Calu3 (cell line): ENCODE measurements at regions of chr1 and their contacts with region 1.

Region 1: GRCh38 chr1:112706908-112707663 is at the start of gene RHOC:
- DNase-seq: peak; percentile 86
- H3K4me3 Mint-ChIP-seq: peak within 1 kb of the TSS; percentile 97
- H3K27ac Mint-ChIP-seq: peak within 1 kb of the TSS; percentile 96
- H3K4me1 Mint-ChIP-seq: peaks cover 34% of the 10 kb centered on the region
- H3K27me3 Mint-ChIP-seq: no peaks in the 10 kb centered on the region
- CTCF ChIP-seq: peak; percentile 78
- total RNA-seq, gene RHOC: 176 and 197 TPM in 2 replicates

Region 2: DNA sequence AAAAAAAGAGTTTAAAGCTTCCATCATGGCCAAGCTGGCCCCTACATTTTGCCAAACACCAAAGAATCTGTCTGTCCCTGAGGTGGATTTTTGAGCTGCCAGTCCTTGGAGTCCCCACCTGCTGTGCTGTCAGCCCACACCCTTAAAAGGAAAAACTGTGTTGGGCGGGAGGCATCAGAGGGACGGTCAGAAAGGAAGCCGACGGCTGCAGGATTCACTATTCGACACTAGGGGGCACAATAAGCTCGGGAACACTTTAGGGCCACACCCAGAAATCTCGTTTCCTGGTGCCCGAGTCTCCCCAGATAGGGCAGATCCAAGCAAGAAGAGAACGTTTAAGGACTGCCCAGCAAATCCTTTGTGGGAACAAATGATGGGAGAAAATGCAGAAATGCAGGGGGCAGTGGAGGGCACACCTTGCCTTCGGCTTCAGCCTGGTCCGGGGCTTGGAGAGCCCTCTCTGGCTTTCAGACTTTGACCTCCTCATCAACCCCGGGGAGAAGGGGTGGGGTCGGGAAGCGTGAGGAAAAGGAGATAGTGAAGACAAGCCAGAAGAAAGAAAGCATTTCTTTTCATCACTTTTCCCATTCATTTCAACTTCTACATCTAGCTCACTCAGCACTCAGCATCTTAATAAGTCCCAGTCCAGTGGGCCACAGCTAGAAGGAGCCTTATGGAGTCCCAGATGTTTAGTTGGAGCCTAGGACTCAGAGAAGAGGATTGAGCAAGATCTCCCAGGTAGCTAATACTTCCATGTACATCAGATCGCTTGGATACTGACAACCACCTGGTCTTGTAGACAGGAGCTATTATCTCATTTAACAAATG is 316.1 kb before region 1 on chr1:
- CTCF ChIA-PET with region 1: interaction called, 3 read pairs
- intact Hi-C with region 1: loop called (anchors 5 kb)
- DNase-seq: peak; percentile 83
- H3K4me3 Mint-ChIP-seq: peak overlapping the region; percentile 66
- H3K27ac Mint-ChIP-seq: peak overlapping the region; percentile 81
- H3K4me1 Mint-ChIP-seq: peaks cover 44% of the 10 kb centered on the region
- H3K27me3 Mint-ChIP-seq: no peaks in the 10 kb centered on the region
- CTCF ChIP-seq: peak; percentile 75

Region 3: GRCh38 chr1:112619520-112620376 is 87.3 kb before region 1 on chr1 and contains the start of gene CAPZA1:
- CTCF ChIA-PET with region 1: no interaction called
- intact Hi-C with region 1: loop called (anchors 2 kb)
- DNase-seq: peak; percentile 84
- H3K4me3 Mint-ChIP-seq: peak within 1 kb of the TSS; percentile 93
- H3K27ac Mint-ChIP-seq: peak within 1 kb of the TSS; percentile 97
- H3K4me1 Mint-ChIP-seq: peaks cover 1% of the 10 kb centered on the region
- H3K27me3 Mint-ChIP-seq: no peaks in the 10 kb centered on the region
- CTCF ChIP-seq: no peak
- total RNA-seq, gene CAPZA1: 103 and 117 TPM in 2 replicates

Region 4: DNA sequence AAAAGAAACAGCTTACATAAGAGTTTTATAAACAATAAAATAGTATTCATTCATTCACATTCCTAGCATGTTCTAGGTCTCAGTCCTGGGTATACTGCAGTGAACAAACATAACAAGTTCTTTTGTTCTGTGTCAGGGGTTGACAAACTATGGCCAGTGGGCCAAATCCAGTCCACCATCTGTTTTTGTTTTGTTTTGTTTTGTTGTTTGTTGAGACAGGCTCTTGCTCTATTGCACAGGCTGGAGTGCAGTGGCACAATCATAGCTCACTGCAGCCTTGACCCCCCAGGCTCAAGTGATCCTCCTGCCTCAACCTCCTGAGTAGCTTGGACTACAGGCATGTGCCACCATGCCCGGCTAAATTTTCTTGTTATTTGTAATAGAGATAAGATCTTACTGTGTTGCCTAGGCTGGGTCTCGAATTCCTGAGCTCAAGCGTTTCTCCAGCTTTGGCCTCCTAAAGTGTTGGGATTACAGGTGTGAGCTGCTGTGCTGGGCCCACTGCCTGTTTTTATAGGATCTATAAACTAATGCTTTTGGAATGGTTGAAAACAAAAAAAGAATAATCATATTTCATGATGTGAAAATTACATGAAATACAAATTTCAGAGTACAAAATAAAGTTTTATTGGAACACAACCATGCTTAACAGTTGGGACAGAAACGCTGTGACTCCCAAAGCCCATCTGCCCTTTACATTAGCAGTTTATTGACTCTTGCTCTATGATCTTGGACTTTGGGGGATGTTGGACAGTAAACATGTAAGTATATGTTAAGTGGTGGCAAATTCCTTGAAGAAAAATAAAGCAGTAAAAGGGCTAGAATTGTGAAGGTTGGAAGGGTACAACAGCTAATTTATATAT is 69.6 kb before region 1 on chr1:
- CTCF ChIA-PET with region 1: interaction called, 3 read pairs
- intact Hi-C with region 1: loop called (anchors 5 kb)
- DNase-seq: peak; percentile 13
- H3K4me3 Mint-ChIP-seq: no peak overlapping the region
- H3K27ac Mint-ChIP-seq: peak overlapping the region; percentile 40
- H3K4me1 Mint-ChIP-seq: peaks cover 34% of the 10 kb centered on the region
- H3K27me3 Mint-ChIP-seq: no peaks in the 10 kb centered on the region
- CTCF ChIP-seq: no peak

Region 5: DNA sequence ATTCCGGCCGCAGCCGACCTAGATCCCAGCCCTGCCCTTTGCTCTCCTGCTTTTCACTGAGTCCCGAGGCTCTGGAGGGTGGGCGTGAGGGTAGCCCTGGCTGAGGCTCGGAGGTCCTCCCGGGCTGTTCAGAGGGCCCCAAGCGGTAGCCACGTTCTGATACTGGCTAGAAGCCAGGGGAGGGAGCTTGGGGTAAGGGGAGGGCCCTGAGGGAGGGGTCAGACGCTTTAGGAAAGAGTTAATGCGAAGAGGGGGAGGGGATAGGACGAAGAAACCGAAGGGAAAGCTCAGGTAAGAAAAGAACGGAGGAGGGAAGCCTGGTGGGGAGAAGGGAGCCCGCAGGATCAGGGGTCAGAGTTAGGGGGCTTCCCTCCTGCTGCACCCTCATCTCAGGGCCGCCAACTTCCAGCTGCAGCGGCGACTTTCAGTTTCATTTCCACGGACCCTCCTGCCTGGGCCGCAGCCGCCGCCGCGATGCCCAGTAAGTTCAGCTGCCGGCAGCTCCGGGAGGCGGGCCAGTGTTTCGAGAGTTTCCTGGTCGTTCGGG is 32.6 kb before region 1 on chr1 and contains the start of gene MOV10:
- CTCF ChIA-PET with region 1: interaction called, 10 read pairs
- intact Hi-C with region 1: no loop called
- DNase-seq: peak; percentile 48
- H3K4me3 Mint-ChIP-seq: peak within 1 kb of the TSS; percentile 90
- H3K27ac Mint-ChIP-seq: peak within 1 kb of the TSS; percentile 94
- H3K4me1 Mint-ChIP-seq: peaks cover 23% of the 10 kb centered on the region
- H3K27me3 Mint-ChIP-seq: no peaks in the 10 kb centered on the region
- CTCF ChIP-seq: no peak
- total RNA-seq, gene MOV10: 71.4 and 80.0 TPM in 2 replicates